CD4-positive, alpha-beta memory T cell (primary cell): ENCODE measurements at regions of chr12 and their contacts with region 1.

Region 1: DNA sequence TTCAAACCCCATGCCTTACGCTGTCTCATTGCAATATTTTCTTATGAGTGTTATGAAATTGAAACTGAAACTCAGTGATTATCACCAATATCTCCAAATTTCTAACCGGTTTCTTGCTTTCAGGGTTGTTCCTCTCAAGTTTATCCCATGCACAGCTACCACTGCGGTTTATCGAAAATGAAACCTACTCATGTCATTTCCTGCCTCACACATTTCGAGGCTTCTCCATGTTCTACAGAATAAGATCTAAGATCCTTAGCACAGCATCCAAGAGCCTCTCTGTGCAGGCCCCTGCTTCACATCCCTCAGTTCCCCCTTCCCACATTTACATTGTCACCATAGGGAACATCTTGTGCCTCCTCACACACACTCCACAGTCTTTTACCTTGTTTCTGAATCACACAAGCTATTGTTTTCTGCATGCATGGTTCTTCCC is 45.5 kb upstream of the FAR2 start:
- DNase-seq: peak; percentile 71 to 83 (median 79)
- H3K4me3 ChIP-seq: peak overlapping the region; percentile 18 to 33
- H3K4me3 Mint-ChIP-seq: peak overlapping the region; percentile 57 to 87 (median 80)
- H3K27ac ChIP-seq: peak overlapping the region; percentile 71
- H3K27ac Mint-ChIP-seq: peak overlapping the region; percentile 85 to 99 (median 98)
- H3K4me1 ChIP-seq: peaks cover 39% of the 10 kb centered on the region
- H3K4me1 Mint-ChIP-seq: peaks cover 30 to 47% (median 37%) of the 10 kb centered on the region in 4 donors
- H3K27me3 ChIP-seq: no peaks in the 10 kb centered on the region
- H3K27me3 Mint-ChIP-seq: no peaks in the 10 kb centered on the region

Region 2: GRCh38 chr12:29088611-29089219 is 14.8 kb before region 1 on chr12:
- CTCF ChIA-PET with region 1: interaction called, 10 read pairs
- POLR2A ChIA-PET with region 1: interaction called, 10 read pairs
- intact Hi-C with region 1: loop called (anchors 2 kb)
- DNase-seq: peak in 4 of 5 donors; percentile 22 to 33 (median 31)
- H3K4me3 ChIP-seq: no peak overlapping the region
- H3K4me3 Mint-ChIP-seq: no peak overlapping the region
- H3K27ac ChIP-seq: no peak overlapping the region
- H3K27ac Mint-ChIP-seq: no peak overlapping the region
- H3K4me1 ChIP-seq: no peaks in the 10 kb centered on the region
- H3K4me1 Mint-ChIP-seq: peaks cover 0 to 5% (median 3%) of the 10 kb centered on the region in 4 donors
- H3K27me3 ChIP-seq: no peaks in the 10 kb centered on the region
- H3K27me3 Mint-ChIP-seq: peaks cover 0 to 3% of the 10 kb centered on the region in 2 donors

Region 3: DNA sequence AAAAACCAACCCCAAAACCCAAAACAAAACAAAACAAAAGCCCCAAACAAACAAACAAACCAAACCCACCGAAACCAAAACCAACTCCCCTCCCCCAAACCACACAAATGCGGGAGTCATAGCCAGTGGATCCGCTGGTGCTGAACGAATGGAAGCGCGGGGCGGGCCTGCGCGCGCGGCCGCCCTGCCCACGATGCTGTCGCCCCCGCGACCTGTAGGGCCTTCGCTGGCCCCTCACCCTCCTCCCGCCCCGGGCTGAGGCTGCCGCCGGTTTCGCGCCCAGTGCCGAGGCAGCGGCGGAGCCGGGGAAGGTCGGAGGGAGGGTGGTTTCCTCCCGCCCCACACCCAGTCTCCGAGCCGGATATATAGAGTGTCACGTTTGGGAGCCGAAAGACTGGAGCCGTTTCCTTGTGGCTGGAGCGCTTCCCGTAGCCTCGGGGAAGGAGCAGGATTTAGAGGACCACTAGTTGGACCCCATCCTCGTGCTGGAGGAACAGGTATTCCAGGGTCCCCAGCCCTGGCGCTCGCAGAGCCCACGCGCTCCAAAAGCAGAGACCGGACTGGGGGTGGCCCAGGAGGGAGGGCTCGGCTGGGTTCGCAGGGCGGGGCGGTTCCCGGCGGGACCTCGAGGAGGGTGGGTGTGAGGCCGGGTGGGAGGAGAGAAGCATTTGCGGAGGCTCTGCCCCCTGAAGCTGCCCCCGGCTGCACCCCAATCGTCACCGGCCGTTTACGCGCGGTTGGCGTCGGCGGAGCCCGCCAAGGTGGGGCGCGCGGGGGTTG is 45.5 kb after region 1 on chr12 and contains the start of gene FAR2:
- CTCF ChIA-PET with region 1: interaction called, 6 read pairs
- POLR2A ChIA-PET with region 1: interaction called, 13 read pairs
- intact Hi-C with region 1: loop called (anchors 2 kb)
- DNase-seq: peak; percentile 43 to 57 (median 55)
- H3K4me3 ChIP-seq: peak within 1 kb of the TSS; percentile 74 to 92
- H3K4me3 Mint-ChIP-seq: peak within 1 kb of the TSS; percentile 94 to 99 (median 97)
- H3K27ac ChIP-seq: peak within 1 kb of the TSS; percentile 46
- H3K27ac Mint-ChIP-seq: peak within 1 kb of the TSS; percentile 85 to 97 (median 94)
- H3K4me1 ChIP-seq: peaks cover 23% of the 10 kb centered on the region
- H3K4me1 Mint-ChIP-seq: peaks cover 23 to 49% (median 37%) of the 10 kb centered on the region in 4 donors
- H3K27me3 ChIP-seq: no peaks in the 10 kb centered on the region
- H3K27me3 Mint-ChIP-seq: no peaks in the 10 kb centered on the region
- total RNA-seq, gene FAR2: 6.2 to 10.1 TPM

Region 4: DNA sequence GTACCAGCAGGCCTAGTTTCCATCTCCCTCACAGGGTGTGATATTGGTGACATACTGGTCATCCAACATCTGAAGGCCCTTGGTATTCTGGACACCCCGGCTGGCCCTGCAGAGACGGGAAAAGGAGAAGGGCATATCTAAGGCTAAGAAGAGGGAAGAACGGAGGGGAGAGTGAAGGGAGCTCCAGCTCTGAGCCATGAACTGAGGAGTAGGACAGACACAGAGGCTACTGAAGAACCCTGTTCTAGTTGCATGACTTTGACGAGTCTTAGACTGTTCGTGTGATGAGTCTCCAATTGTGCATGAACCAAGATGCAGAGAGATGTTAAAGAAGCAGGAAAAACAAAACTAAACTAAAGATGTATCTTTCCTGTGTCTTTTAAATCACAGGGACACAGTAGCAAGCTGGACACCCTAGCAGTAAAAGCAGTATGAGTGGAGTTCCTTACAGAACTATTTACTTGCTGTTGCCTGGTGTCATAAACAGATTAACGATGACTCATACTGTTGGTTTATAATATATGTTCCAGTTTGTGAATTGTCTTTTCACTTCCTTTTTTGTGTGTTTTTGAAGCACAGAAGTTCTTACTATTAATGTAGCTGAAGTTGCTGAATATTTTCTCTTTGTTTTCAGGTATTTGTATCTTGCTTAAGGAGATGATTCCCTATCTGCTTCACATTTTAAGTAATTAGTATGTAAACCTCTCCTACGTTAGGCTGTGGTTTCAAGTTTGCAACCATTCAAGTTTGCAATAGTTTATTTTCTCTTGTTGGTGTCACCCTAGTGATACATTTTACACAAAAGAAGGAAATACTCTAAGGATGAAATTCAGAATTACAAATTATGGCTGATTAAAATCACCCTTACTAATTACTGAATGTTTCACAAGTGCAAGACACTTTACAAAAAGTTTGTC is 61.2 kb after region 1 on chr12:
- CTCF ChIA-PET with region 1: interaction called, 3 read pairs
- POLR2A ChIA-PET with region 1: interaction called, 9 read pairs
- intact Hi-C with region 1: loop called (anchors 2 kb)
- DNase-seq: peak in 4 of 5 donors; percentile 8 to 37 (median 24)
- H3K4me3 ChIP-seq: no peak overlapping the region
- H3K4me3 Mint-ChIP-seq: peak overlapping the region in 5 of 8 donors; percentile 15 to 37 (median 26)
- H3K27ac ChIP-seq: peak overlapping the region; percentile 1
- H3K27ac Mint-ChIP-seq: peak overlapping the region; percentile 55 to 91 (median 64)
- H3K4me1 ChIP-seq: peaks cover 22% of the 10 kb centered on the region
- H3K4me1 Mint-ChIP-seq: peaks cover 24 to 37% (median 29%) of the 10 kb centered on the region in 4 donors
- H3K27me3 ChIP-seq: no peaks in the 10 kb centered on the region
- H3K27me3 Mint-ChIP-seq: no peaks in the 10 kb centered on the region

Region 5: DNA sequence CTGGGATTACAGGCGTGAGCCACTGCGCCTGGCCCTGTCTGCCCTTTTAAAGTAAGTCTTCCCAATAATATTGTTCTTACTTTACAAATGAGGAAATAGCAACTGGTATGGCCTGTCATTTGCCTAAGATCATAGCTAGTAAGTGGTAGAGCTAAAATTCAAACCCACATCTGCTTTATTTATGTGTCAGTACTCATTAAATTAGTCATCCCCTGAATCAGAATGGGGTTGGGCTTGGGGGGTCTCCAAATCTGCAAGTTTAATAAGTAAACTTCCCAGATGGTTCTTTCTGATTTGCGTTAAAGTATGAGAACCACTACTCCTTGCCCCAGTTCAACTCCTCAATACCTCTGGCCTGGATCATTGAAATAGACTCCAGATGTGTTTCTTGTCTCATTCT is 141.7 kb after region 1 on chr12:
- CTCF ChIA-PET with region 1: no interaction called
- POLR2A ChIA-PET with region 1: no interaction called
- intact Hi-C with region 1: no loop called
- DNase-seq: no peak
- H3K4me3 ChIP-seq: no peak overlapping the region
- H3K4me3 Mint-ChIP-seq: no peak overlapping the region
- H3K27ac ChIP-seq: no peak overlapping the region
- H3K27ac Mint-ChIP-seq: no peak overlapping the region
- H3K4me1 ChIP-seq: peaks cover 6% of the 10 kb centered on the region
- H3K4me1 Mint-ChIP-seq: peaks cover 8 to 22% (median 11%) of the 10 kb centered on the region in 4 donors
- H3K27me3 ChIP-seq: no peaks in the 10 kb centered on the region
- H3K27me3 Mint-ChIP-seq: no peaks in the 10 kb centered on the region

Region 6: GRCh38 chr12:29380536-29381523 is 277.3 kb after region 1 on chr12 and contains the start of gene ERGIC2:
- CTCF ChIA-PET with region 1: interaction called, 6 read pairs
- POLR2A ChIA-PET with region 1: interaction called, 21 read pairs
- intact Hi-C with region 1: loop called (anchors 1 kb)
- DNase-seq: peak; percentile 93 to 96 (median 96)
- H3K4me3 ChIP-seq: peak within 1 kb of the TSS; percentile 92 to 100
- H3K4me3 Mint-ChIP-seq: peak within 1 kb of the TSS; percentile 89 to 98 (median 94)
- H3K27ac ChIP-seq: peak within 1 kb of the TSS; percentile 95
- H3K27ac Mint-ChIP-seq: peak within 1 kb of the TSS; percentile 94 to 99 (median 98)
- H3K4me1 ChIP-seq: peaks cover 27% of the 10 kb centered on the region
- H3K4me1 Mint-ChIP-seq: peaks cover 24 to 57% (median 46%) of the 10 kb centered on the region in 4 donors
- H3K27me3 ChIP-seq: no peaks in the 10 kb centered on the region
- H3K27me3 Mint-ChIP-seq: no peaks in the 10 kb centered on the region
- total RNA-seq, gene ERGIC2: 74.9 to 82.9 TPM

Region 7: DNA sequence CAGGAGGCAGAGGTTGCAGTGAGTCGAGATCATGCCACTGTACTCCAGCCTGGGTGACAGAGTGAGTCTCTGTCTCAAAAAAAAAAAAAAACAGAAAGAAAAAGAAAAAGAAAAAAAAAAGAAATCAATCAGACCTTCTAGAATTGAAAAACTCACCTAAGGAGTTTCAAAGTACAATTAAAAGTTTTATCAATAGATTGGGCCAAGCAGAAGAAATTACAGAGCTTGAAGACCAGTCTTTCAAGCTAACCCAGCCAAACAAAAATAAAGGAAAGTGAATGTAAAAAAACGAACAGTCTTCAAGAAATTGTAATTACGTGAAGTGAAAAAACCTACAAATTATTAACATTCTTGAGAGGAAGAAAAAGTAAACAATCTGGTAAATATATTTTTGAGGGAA is 1499.1 kb after region 1 on chr12:
- CTCF ChIA-PET with region 1: no interaction called
- POLR2A ChIA-PET with region 1: no interaction called
- intact Hi-C with region 1: no loop called
- DNase-seq: no peak
- H3K4me3 ChIP-seq: no peak overlapping the region
- H3K4me3 Mint-ChIP-seq: no peak overlapping the region
- H3K27ac ChIP-seq: no peak overlapping the region
- H3K27ac Mint-ChIP-seq: no peak overlapping the region
- H3K4me1 ChIP-seq: no peaks in the 10 kb centered on the region
- H3K4me1 Mint-ChIP-seq: no peaks in the 10 kb centered on the region
- H3K27me3 ChIP-seq: no peaks in the 10 kb centered on the region
- H3K27me3 Mint-ChIP-seq: peaks cover 1 to 6% of the 10 kb centered on the region in 2 donors